Left colon (tissue), 2 donors: ENCODE measurements at regions of chr4 and their contacts with region 1.

Region 1: GRCh38 chr4:87093443-87094123 is 126.8 kb downstream of the KLHL8 start:
- DNase-seq: peak in 1 of 2 donors; percentile 32
- ATAC-seq: peak; percentile 48

Region 2: GRCh38 chr4:86924811-86925210 is 168.8 kb before region 1 on chr4:
- intact Hi-C with region 1: loop called in 1 of 2 experiments (anchors 5 kb)
- DNase-seq: no peak
- ATAC-seq: no peak